SK-N-SH (cell line): ENCODE measurements at regions of chr15 and their contacts with region 1.

Region 1: DNA sequence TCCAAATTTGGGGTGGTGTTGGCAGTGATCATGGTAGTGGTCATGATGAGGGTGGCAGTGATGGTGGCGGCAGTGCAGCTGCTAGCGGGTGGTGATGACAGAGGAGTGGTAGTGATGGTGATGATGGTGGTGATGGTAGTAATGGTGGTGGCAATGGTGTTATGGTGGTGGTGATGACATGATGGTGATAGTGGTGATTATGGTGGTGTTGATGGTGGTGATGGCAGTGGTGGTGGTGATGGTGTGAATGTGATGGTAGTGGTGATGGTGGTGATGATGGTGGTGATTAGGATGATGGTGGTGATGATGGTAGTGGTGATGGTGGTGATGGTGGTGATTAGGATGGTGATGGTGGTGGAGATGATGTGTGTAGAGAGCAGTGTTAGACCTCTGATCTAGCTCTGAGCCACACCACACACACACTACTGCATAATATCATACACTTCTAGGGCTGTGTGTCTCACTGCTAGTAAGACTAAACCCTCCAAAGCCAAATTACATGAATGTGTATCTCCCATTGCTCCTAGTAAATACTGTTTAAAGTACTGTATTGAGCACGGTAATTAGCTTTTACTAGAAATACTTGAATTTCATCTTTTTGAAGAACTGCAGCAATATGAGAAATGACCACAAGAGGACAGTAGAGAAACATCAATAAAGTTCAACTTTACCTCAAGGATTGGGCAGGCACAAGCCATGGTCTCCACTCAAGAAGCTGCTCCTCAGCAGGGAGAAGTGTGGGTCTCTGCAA is 28.8 kb downstream of the TMED3 start:
- DNase-seq: peak; percentile 25
- H3K4me3 ChIP-seq: no peak overlapping the region; a peak in 1 of 4 replicates
- H3K27ac ChIP-seq: no peak overlapping the region
- H3K4me1 ChIP-seq: peaks cover 0 to 5% of the 10 kb centered on the region in 2 experiments; a peak in 1 of 4 replicates
- H3K27me3 ChIP-seq: no peaks in the 10 kb centered on the region
- CTCF ChIP-seq: peak; percentile 94
- EP300 ChIP-seq: no peak
- RAD21 ChIP-seq: peak; percentile 89

Region 2: GRCh38 chr15:79248183-79248582 is 91.6 kb before region 1 on chr15:
- CTCF ChIA-PET with region 1: no interaction called
- POLR2A ChIA-PET with region 1: no interaction called
- DNase-seq: no peak
- H3K4me3 ChIP-seq: no peak overlapping the region
- H3K27ac ChIP-seq: no peak overlapping the region
- H3K4me1 ChIP-seq: no peaks in the 10 kb centered on the region
- H3K27me3 ChIP-seq: no peaks in the 10 kb centered on the region
- CTCF ChIP-seq: no peak
- EP300 ChIP-seq: no peak
- RAD21 ChIP-seq: no peak

Region 3: GRCh38 chr15:79322945-79323344 is 16.8 kb before region 1 on chr15:
- CTCF ChIA-PET with region 1: interaction called, 10 read pairs
- POLR2A ChIA-PET with region 1: no interaction called
- DNase-seq: no peak
- H3K4me3 ChIP-seq: no peak overlapping the region
- H3K27ac ChIP-seq: no peak overlapping the region
- H3K4me1 ChIP-seq: no peaks in the 10 kb centered on the region
- H3K27me3 ChIP-seq: no peaks in the 10 kb centered on the region
- CTCF ChIP-seq: no peak
- EP300 ChIP-seq: no peak
- RAD21 ChIP-seq: no peak

Region 4: GRCh38 chr15:79370716-79371115 is 31.0 kb after region 1 on chr15:
- CTCF ChIA-PET with region 1: interaction called, 49 read pairs
- POLR2A ChIA-PET with region 1: no interaction called
- DNase-seq: no peak
- H3K4me3 ChIP-seq: no peak overlapping the region
- H3K27ac ChIP-seq: no peak overlapping the region
- H3K4me1 ChIP-seq: peaks cover under 1 to 12% of the 10 kb centered on the region in 2 experiments; a peak in 2 of 4 replicates
- H3K27me3 ChIP-seq: no peaks in the 10 kb centered on the region
- CTCF ChIP-seq: no peak
- EP300 ChIP-seq: no peak
- RAD21 ChIP-seq: no peak

Region 5: DNA sequence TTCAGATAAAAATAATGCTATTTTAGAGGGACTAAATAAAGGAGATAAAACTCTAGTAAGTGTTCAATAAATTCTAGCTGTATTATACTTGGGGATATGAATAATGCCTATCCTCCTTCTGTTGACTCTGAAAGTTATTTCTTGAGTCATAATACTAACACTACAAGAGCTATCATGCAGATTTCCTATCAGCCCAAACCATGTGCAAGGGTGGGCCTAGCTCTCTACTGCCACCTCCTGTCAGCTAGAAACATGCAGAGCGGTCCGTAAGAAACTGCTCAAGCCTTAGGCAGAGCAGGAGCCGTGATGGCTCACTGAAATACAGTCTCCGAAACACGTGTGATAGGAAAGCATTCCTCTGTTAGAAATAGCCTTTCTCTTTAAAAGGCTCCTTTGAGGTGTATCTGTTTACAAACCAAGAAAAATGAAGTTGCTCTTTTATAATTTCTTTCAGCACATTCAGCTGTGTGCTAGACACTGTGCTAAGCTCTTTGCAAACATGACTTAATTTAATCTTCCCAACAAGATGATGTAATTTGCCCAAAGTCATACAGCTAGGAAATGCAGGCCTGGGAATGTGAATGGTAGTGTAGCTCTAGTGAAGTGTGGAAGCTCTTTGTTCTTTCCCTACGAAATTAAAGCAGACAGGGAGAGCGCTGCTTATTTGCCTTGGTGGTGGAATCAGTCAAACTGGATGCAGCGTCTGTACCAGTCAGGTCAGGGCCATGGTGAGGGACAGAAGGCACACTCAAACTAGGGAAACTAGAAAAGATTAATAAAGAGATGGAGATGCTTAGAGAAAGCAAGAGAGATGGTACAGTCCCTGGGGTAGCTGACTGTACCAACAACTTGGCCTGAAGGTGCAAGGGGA is 514.0 kb after region 1 on chr15:
- CTCF ChIA-PET with region 1: interaction called, 33 read pairs
- POLR2A ChIA-PET with region 1: no interaction called
- DNase-seq: peak; percentile 60
- H3K4me3 ChIP-seq: peak overlapping the region in 1 of 2 experiments; percentile 27; a peak in 1 of 4 replicates
- H3K27ac ChIP-seq: peak overlapping the region in 1 of 2 experiments; percentile 79; a peak in 2 of 4 replicates
- H3K4me1 ChIP-seq: peaks cover 0 to 6% of the 10 kb centered on the region in 2 experiments; a peak in 2 of 4 replicates
- H3K27me3 ChIP-seq: no peaks in the 10 kb centered on the region
- CTCF ChIP-seq: peak; percentile 98
- EP300 ChIP-seq: no peak
- RAD21 ChIP-seq: peak; percentile 94